ENCODE measurements at regions of chr10 and their contacts with region 1.

Region 1: GRCh38 chr10:69065406-69066361 is 22.2 kb upstream of the SRGN start:
- DNase-seq: peak; percentile 39
- H3K4me3 Mint-ChIP-seq: peak overlapping the region; percentile 62
- H3K27ac Mint-ChIP-seq: peak overlapping the region; percentile 99
- H3K4me1 Mint-ChIP-seq: peaks cover 51% of the 10 kb centered on the region
- H3K27me3 Mint-ChIP-seq: no peaks in the 10 kb centered on the region

Region 2: DNA sequence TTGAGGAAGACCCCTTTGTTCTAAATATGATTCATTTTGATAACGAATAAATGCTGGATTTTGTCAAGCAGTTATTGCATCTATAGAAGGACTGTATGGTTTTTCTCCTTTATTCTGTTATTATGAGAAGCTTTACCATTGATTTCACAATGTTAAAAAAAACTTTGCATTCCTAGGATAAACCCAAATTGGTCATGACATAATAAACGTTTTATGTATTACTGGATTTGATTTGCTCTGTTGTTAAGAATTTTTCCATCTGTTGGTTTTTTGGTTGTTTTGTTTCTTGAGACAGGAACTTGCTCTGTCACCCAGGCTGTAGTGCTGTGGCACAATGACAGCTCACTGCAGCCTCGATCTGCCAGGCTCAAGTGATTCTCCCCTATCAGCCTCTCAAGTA is 591.7 kb before region 1 on chr10:
- intact Hi-C with region 1: no loop called
- DNase-seq: no peak
- H3K4me3 Mint-ChIP-seq: no peak overlapping the region
- H3K27ac Mint-ChIP-seq: no peak overlapping the region
- H3K4me1 Mint-ChIP-seq: peaks cover 25% of the 10 kb centered on the region
- H3K27me3 Mint-ChIP-seq: no peaks in the 10 kb centered on the region

Region 3: DNA sequence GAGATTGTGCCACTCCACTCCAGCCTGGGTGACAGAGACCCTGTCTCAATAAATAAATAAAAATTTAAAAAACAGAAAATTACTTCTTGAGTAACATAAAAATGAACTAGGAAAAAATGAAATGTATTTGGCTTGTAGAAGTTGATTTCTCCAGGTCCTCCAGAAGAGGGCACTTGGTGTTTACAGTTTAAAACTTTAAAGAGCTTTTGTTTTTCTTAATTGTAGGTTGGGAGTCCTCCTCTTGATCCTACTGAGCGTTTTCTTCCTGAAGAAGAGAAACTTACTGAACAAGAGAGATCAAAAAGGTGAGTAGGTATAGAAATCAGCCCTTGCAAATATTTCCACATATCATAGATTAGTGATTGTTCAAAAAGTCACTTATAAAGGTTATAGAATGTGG is 60.9 kb before region 1 on chr10:
- intact Hi-C with region 1: loop called (anchors 1 kb)
- DNase-seq: no peak
- H3K4me3 Mint-ChIP-seq: no peak overlapping the region
- H3K27ac Mint-ChIP-seq: no peak overlapping the region
- H3K4me1 Mint-ChIP-seq: peaks cover 18% of the 10 kb centered on the region
- H3K27me3 Mint-ChIP-seq: no peaks in the 10 kb centered on the region

Region 4: GRCh38 chr10:69045441-69046300 is 20.0 kb before region 1 on chr10:
- intact Hi-C with region 1: loop called (anchors 1 kb)
- DNase-seq: peak; percentile 42
- H3K4me3 Mint-ChIP-seq: peak overlapping the region; percentile 76
- H3K27ac Mint-ChIP-seq: peak overlapping the region; percentile 99
- H3K4me1 Mint-ChIP-seq: peaks cover 54% of the 10 kb centered on the region
- H3K27me3 Mint-ChIP-seq: no peaks in the 10 kb centered on the region

Region 5: DNA sequence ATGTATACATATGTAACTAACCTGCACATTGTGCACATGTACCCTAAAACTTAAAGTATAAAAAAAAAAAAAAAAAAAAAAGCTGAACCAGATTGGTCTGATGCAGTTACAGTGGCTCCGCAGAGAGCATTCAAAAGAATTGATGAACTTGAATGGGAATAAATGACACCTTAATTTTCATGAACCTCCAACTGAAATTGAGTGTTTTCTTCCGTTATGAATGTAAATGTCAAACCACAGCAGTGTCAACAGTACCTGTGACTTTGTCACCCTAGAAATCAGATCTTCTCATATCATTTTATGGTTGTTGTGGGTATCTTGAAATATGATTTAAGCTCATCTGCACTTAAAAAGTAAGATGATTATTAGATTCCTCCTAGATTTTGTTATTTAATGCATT is 10.4 kb before region 1 on chr10:
- intact Hi-C with region 1: loop called (anchors 1 kb)
- DNase-seq: no peak
- H3K4me3 Mint-ChIP-seq: no peak overlapping the region
- H3K27ac Mint-ChIP-seq: peak overlapping the region; percentile 84
- H3K4me1 Mint-ChIP-seq: peaks cover 56% of the 10 kb centered on the region
- H3K27me3 Mint-ChIP-seq: no peaks in the 10 kb centered on the region

Region 6: GRCh38 chr10:69262292-69262751 is 196.6 kb after region 1 on chr10:
- intact Hi-C with region 1: loop called (anchors 2 kb)
- DNase-seq: no peak
- H3K4me3 Mint-ChIP-seq: peak overlapping the region; percentile 3
- H3K27ac Mint-ChIP-seq: peak overlapping the region; percentile 32
- H3K4me1 Mint-ChIP-seq: peaks cover 22% of the 10 kb centered on the region
- H3K27me3 Mint-ChIP-seq: peaks cover 7% of the 10 kb centered on the region

Measured in activated T-helper 1 cell treated with anti-CD3 and anti-CD28 coated beads, Interleukin-12 subunit alpha, Interleukin-12 subunit beta, Interleukin-2, Interleukin-4 antibody, amounts not matched to agents 30 ng/mL and 10 ng/mL and 1 ng/mL, durations not matched to agents 14 hours and 24 hours and 36 hours (primary cell).